ENCODE measurements at regions of chr2 and their contacts with region 1.

Region 1: GRCh38 chr2:1550658-1551316 is 137.5 kb downstream of the TPO start:
- DNase-seq: no peak
- ATAC-seq: peak; percentile 97
- H3K4me3 ChIP-seq: no peak overlapping the region
- H3K27ac ChIP-seq: no peak overlapping the region
- H3K4me1 ChIP-seq: no peaks in the 10 kb centered on the region
- H3K27me3 ChIP-seq: no peaks in the 10 kb centered on the region
- CTCF ChIP-seq: peak; percentile 75 to 92 (median 90)
- EP300 ChIP-seq: no peak
- POLR2A ChIP-seq: no peak
- RAD21 ChIP-seq: peak; percentile 61

Region 2: DNA sequence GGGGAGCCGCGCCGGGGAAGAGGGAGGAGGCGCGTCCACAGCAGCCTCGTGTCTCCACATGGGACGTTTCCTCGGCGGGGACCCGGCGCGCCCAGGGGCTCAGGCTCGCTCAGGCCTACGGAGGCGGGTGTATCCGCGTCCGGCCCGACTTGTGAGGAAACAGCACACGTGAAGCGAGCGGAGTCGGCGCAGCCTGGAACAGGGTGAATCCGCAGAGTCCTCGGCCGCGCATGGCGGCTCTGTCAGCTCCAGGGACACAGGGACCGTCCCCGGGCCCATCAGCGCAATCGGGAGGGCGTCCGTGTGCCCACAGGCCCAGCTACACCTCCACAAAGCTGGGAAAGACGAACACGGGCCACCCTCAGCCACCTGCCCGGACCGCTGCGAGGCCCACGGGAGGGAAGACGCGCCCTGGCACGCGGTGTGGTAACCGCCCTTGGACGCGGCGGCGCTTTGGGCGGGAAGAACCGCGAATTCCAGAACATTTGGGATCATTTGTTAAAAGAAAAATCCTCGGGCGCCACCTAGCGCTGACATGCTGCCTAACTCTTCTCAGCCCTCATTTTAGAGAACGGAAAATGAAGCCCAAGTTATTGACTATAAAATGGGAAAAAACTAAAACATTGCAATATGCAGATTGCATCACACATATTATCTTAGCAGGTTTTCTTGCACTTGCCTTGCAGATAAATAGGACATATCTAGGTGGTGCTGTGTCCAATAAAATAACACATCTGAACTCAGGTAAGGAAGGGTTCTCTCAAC is 914.0 kb before region 1 on chr2:
- CTCF ChIA-PET with region 1: no interaction called
- POLR2A ChIA-PET with region 1: no interaction called
- RAD21 ChIA-PET with region 1: interaction called, 3 read pairs
- SMC1A ChIA-PET with region 1: no interaction called
- in situ Hi-C with region 1: no loop called
- intact Hi-C with region 1: loop called (anchors 10 kb)
- DNase-seq: no peak
- ATAC-seq: peak; percentile 76
- H3K4me3 ChIP-seq: no peak overlapping the region
- H3K27ac ChIP-seq: no peak overlapping the region
- H3K4me1 ChIP-seq: no peaks in the 10 kb centered on the region
- H3K27me3 ChIP-seq: no peaks in the 10 kb centered on the region; a peak in 1 of 4 replicates
- CTCF ChIP-seq: peak; percentile 73 to 83 (median 83)
- EP300 ChIP-seq: no peak
- POLR2A ChIP-seq: no peak
- RAD21 ChIP-seq: peak; percentile 73

Region 3: GRCh38 chr2:854460-854859 is 696.3 kb before region 1 on chr2:
- CTCF ChIA-PET with region 1: no interaction called
- POLR2A ChIA-PET with region 1: no interaction called
- RAD21 ChIA-PET with region 1: no interaction called
- SMC1A ChIA-PET with region 1: no interaction called
- in situ Hi-C with region 1: loop called (anchors 10 kb)
- intact Hi-C with region 1: loop called (anchors 5 kb)
- DNase-seq: no peak
- ATAC-seq: peak; percentile 70
- H3K4me3 ChIP-seq: no peak overlapping the region
- H3K27ac ChIP-seq: no peak overlapping the region
- H3K4me1 ChIP-seq: no peaks in the 10 kb centered on the region
- H3K27me3 ChIP-seq: no peaks in the 10 kb centered on the region
- CTCF ChIP-seq: peak; percentile 40 to 58 (median 53); a peak in 5 of 6 replicates
- EP300 ChIP-seq: no peak
- POLR2A ChIP-seq: no peak
- RAD21 ChIP-seq: peak; percentile 52

Measured in GM12878 (cell line).